ENCODE measurements at regions of chr4 and their contacts with region 1.

Region 1: DNA sequence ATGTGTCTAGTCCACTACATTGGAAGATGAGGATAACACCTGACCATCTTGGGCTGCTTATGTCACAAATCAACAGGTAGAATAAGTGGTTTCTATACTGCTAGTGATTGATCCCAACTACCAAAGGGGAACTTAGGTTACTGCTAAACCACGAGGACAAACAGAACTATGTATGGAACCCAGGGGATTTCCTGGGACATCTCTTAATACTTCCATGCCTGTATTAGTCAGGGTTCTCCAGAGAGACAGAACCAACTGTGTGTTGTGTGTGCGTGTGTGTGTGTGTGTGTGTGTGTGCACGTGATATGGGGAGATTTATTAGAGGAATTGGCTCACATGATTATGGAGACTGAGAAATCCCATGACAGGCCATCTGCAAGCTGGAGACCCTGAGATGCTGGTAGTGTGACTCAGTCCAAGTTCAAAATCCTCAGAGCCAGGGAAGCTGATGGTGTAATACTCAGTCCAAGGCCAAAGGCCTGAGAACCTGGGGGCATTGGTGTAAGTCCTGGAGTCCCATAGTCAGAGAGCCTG is 16.2 kb upstream of the AFF1 start:
- DNase-seq: no peak
- ATAC-seq: peak; percentile 53
- H3K4me3 ChIP-seq: no peak overlapping the region
- H3K27ac ChIP-seq: no peak overlapping the region
- H3K4me1 ChIP-seq: peaks cover 3% of the 10 kb centered on the region; the same call in 1 of the 2 replicates
- H3K27me3 ChIP-seq: no peaks in the 10 kb centered on the region
- CTCF ChIP-seq: no peak
- EP300 ChIP-seq: no peak
- POLR2A ChIP-seq: no peak
- RAD21 ChIP-seq: no peak

Region 2: DNA sequence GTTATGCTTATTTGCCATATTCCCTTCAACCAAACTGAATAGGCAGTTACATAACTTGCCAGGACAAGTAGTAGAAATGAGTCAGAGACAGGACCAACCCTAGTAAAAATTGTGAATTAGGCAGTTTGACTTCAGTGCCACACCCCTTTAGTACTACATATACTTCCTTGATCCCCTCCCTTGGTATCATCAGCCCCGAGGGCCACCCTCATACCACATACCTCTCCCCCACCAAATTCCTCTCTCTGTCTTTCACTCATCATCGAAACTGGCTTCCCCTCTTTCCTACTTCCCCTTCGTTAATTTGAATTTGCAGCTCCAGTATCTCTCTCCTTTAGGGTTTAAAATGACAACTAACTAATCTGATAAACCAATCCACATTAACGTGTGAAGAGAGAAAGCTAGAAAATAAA is 332.4 kb before region 1 on chr4:
- CTCF ChIA-PET with region 1: no interaction called
- POLR2A ChIA-PET with region 1: no interaction called
- RAD21 ChIA-PET with region 1: no interaction called
- SMC1A ChIA-PET with region 1: no interaction called
- in situ Hi-C with region 1: no loop called
- intact Hi-C with region 1: no loop called
- DNase-seq: no peak
- ATAC-seq: peak; percentile 76
- H3K4me3 ChIP-seq: no peak overlapping the region
- H3K27ac ChIP-seq: no peak overlapping the region
- H3K4me1 ChIP-seq: 0 out of 2 replicates have a peak, but pooled peaks cover 3% of the 10 kb centered on the region
- H3K27me3 ChIP-seq: no peaks in the 10 kb centered on the region
- CTCF ChIP-seq: no peak
- EP300 ChIP-seq: 0 out of 4 replicates have a peak, but pooled peaks of 1 of the 2 experiments have one; percentile 21
- POLR2A ChIP-seq: no peak
- RAD21 ChIP-seq: no peak

Region 3: DNA sequence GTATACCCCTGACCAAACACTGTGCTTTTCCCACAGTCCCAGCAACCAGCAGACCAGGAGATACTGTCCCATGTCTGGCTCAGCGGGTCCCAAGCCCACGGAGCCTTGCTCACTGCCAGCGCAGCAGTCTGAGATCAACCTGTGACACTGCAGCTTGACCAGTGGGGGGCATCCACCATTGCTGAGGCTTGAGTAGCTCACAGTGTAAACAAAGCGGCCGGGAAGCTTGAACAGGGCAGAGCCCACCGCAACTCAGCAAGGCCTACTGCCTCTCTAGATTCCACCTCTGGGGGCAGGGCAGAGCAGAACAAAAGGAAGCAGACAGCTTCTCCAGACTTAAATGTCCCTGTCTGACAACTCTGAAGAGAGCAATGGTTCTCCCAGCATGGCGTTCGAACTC is 127.5 kb before region 1 on chr4:
- CTCF ChIA-PET with region 1: no interaction called
- POLR2A ChIA-PET with region 1: no interaction called
- RAD21 ChIA-PET with region 1: no interaction called
- SMC1A ChIA-PET with region 1: no interaction called
- in situ Hi-C with region 1: no loop called
- intact Hi-C with region 1: no loop called
- DNase-seq: no peak
- ATAC-seq: no peak
- H3K4me3 ChIP-seq: no peak overlapping the region
- H3K27ac ChIP-seq: no peak overlapping the region
- H3K4me1 ChIP-seq: no peaks in the 10 kb centered on the region
- H3K27me3 ChIP-seq: no peaks in the 10 kb centered on the region
- CTCF ChIP-seq: no peak
- EP300 ChIP-seq: no peak
- POLR2A ChIP-seq: no peak
- RAD21 ChIP-seq: no peak

Region 4: DNA sequence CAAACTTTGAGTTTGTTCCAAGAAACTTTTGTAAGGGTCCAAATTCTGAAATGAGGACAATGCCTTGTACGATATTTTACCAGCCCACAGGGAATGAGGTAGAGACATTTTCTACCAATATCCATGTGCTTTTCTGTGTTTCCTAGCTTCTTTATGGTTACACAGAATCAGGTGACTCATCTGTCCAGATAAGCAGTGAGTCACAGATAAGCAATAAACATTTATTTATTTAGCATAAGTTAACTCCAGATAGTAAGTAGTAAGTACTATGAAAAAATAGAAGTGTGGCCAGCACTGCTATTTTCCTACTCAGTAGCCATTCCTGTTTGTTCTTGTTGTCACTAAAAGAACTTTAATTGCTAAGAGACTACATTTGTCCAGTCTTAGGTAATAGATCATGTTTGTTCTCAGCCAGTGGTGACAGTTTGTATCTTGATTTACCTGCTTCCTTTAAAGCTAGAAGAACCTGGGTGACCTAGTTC is 23.6 kb after region 1 on chr4:
- CTCF ChIA-PET with region 1: interaction called, 11 read pairs
- POLR2A ChIA-PET with region 1: interaction called, 5 read pairs
- RAD21 ChIA-PET with region 1: interaction called, 89 read pairs
- SMC1A ChIA-PET with region 1: interaction called, 74 read pairs
- in situ Hi-C with region 1: no loop called
- intact Hi-C with region 1: no loop called
- DNase-seq: no peak
- ATAC-seq: no peak
- H3K4me3 ChIP-seq: peak overlapping the region; percentile 15; the same call in 1 of the 2 replicates
- H3K27ac ChIP-seq: no peak overlapping the region
- H3K4me1 ChIP-seq: peaks cover 45% of the 10 kb centered on the region
- H3K27me3 ChIP-seq: no peaks in the 10 kb centered on the region
- CTCF ChIP-seq: no peak
- EP300 ChIP-seq: no peak
- POLR2A ChIP-seq: no peak
- RAD21 ChIP-seq: no peak

Region 5: DNA sequence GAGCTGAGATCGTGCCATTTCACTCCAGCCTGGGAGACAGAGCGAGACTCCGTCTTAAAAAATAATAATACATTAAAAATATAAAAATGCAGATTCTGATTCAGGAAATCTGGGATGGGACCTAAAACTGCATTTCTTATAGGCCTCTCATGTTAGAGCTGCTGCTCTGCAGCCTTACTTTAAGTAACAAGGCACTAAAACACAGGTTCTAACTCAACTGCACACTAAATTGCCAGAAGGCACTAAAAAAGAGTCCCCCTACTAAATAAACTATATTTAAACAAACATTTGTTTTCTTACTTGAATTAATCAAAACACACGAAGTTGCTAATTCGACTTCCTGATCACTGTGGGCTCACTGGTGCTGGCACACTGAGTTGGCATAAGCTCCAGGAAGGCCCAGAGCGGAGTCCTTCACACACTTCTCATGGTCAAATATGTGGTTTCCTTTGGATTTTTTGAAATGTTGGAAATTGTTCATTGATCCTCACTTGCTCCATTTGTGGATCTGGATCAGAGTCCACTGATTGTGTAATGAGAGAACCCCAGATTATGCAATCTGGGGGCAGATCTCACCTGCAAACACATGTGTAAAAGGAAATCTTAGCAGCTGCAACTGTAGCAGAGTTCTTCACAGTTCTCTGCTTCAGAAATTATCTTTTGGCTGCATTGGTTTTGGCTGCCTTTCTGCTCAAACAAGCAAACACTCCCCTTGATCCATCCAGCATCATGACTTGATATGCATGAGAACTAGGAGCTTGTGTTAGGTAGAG is 75.5 kb after region 1 on chr4:
- CTCF ChIA-PET with region 1: interaction called, 4 read pairs
- POLR2A ChIA-PET with region 1: no interaction called
- RAD21 ChIA-PET with region 1: interaction called, 10 read pairs
- SMC1A ChIA-PET with region 1: interaction called, 18 read pairs
- in situ Hi-C with region 1: no loop called
- intact Hi-C with region 1: no loop called
- DNase-seq: no peak
- ATAC-seq: no peak
- H3K4me3 ChIP-seq: no peak overlapping the region
- H3K27ac ChIP-seq: no peak overlapping the region
- H3K4me1 ChIP-seq: peaks cover 22% of the 10 kb centered on the region
- H3K27me3 ChIP-seq: no peaks in the 10 kb centered on the region
- CTCF ChIP-seq: no peak
- EP300 ChIP-seq: no peak
- POLR2A ChIP-seq: no peak
- RAD21 ChIP-seq: no peak

Region 6: DNA sequence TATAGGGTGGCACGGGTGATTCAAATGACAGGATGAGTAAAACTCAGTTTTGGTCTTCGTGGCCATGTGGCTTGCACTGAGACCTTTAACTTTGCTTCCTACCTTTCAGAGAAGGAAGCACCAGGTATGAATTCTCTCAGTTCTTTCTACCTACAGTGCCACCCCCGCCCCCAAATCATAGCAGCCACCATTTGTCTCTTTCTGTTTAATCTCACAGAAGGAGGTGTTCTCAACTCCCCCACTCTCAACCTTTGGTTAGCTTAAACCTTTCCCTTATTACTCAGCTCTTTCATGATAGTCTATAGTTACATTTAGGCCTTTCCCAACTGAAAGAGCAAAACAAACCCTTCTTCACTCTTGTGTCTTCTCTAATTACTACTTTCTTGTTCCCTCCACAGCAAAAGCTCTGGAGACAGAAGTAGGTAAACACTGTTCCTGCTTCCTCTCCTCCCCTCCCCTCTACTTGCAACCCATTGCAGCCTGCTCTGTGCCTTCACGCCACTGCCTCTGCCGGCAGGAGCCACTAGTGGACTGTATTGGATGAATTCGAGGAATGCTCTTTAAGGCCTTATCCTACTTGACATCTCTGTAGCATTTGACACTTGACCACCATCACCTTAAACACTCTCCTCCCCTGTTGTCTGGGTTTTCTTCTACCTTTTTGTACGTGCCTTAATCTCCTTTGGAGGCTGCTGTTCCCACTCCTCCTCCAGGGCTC is 139.9 kb after region 1 on chr4:
- CTCF ChIA-PET with region 1: interaction called, 22 read pairs
- POLR2A ChIA-PET with region 1: no interaction called
- RAD21 ChIA-PET with region 1: interaction called, 5 read pairs
- SMC1A ChIA-PET with region 1: interaction called, 26 read pairs
- in situ Hi-C with region 1: no loop called
- intact Hi-C with region 1: no loop called
- DNase-seq: no peak
- ATAC-seq: peak; percentile 56
- H3K4me3 ChIP-seq: no peak overlapping the region
- H3K27ac ChIP-seq: peak overlapping the region; percentile 4; the same call in 1 of the 2 replicates
- H3K4me1 ChIP-seq: peaks cover 37% of the 10 kb centered on the region
- H3K27me3 ChIP-seq: no peaks in the 10 kb centered on the region
- CTCF ChIP-seq: no peak; a peak in 1 of 6 replicates
- EP300 ChIP-seq: no peak
- POLR2A ChIP-seq: no peak
- RAD21 ChIP-seq: peak; percentile 43; the same call in 1 of the 2 replicates

Region 7: GRCh38 chr4:87103691-87104187 is 185.1 kb after region 1 on chr4:
- CTCF ChIA-PET with region 1: interaction called, 70 read pairs
- POLR2A ChIA-PET with region 1: no interaction called
- RAD21 ChIA-PET with region 1: interaction called, 8 read pairs
- SMC1A ChIA-PET with region 1: interaction called, 63 read pairs
- in situ Hi-C with region 1: no loop called
- intact Hi-C with region 1: no loop called
- DNase-seq: no peak
- ATAC-seq: no peak
- H3K4me3 ChIP-seq: no peak overlapping the region
- H3K27ac ChIP-seq: no peak overlapping the region
- H3K4me1 ChIP-seq: no peaks in the 10 kb centered on the region
- H3K27me3 ChIP-seq: no peaks in the 10 kb centered on the region
- CTCF ChIP-seq: no peak
- EP300 ChIP-seq: no peak
- POLR2A ChIP-seq: no peak
- RAD21 ChIP-seq: no peak

Region 8: DNA sequence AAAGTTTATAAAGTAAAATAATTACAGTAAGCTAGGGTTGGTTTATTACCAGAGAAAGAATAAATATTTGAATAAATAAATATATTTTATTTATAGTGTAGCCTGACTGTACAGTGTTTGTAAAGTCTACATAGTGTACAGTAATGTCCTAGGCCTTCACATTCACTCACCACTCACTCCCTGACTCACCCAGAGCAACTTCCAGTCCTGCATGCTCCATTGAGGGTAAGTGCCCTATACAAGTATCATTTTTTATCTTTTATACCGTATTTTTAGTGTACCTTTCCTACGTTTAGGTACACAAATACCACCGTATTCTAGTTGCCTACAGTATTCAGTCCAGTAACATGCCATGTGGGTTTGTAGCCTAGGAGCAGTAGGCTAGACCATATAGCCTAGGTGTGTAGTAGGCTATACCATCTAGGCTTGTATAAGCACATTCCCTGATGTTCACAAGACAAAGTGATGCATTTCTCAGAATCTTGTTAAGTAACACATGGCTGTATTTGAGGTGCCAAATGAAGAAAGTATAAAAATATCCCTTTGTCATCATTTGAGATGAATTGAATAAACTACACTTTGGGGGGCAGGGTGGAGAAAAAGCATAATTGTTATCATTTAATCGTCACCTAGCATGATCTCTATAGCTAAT is 316.5 kb after region 1 on chr4:
- CTCF ChIA-PET with region 1: interaction called, 33 read pairs
- POLR2A ChIA-PET with region 1: interaction called, 5 read pairs
- RAD21 ChIA-PET with region 1: interaction called, 26 read pairs
- SMC1A ChIA-PET with region 1: interaction called, 29 read pairs
- in situ Hi-C with region 1: loop called (anchors 5 kb)
- intact Hi-C with region 1: loop called (anchors 1 kb)
- DNase-seq: no peak
- ATAC-seq: peak; percentile 32; the same call in 2 of the 3 replicates
- H3K4me3 ChIP-seq: peak overlapping the region; percentile 66; the same call in 1 of the 2 replicates
- H3K27ac ChIP-seq: no peak overlapping the region
- H3K4me1 ChIP-seq: no peaks in the 10 kb centered on the region; the same call in 1 of the 2 replicates
- H3K27me3 ChIP-seq: no peaks in the 10 kb centered on the region
- CTCF ChIP-seq: no peak
- EP300 ChIP-seq: no peak
- POLR2A ChIP-seq: no peak
- RAD21 ChIP-seq: no peak